A673 (cell line): ENCODE measurements at regions of chr22 and their contacts with region 1.

Region 1: GRCh38 chr22:46196278-46196677 is 46.0 kb downstream of the PPARA start:
- DNase-seq: no peak
- H3K4me3 ChIP-seq: no peak overlapping the region
- H3K27ac ChIP-seq: no peak overlapping the region
- H3K4me1 ChIP-seq: no peaks in the 10 kb centered on the region
- H3K27me3 ChIP-seq: no peaks in the 10 kb centered on the region
- CTCF ChIP-seq: no peak

Region 2: DNA sequence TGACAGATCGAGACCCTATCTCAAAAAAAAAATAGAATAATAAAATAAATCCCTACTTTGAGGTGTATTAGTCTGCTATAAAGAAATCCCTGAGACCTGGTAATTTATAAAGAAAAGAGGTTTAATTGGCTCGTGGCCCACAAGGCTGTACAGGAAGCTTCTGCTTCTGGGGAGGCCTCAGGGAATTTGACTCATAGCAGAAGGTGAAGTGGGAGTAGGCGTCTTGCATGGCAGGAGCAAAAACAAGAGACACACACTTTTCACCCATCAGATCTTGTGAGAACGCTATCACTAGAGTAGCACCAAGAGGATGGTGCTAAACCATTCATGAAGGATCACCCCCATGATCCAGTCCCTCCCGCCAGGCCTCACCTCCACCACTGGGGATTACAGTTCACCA is 24.6 kb after region 1 on chr22:
- CTCF ChIA-PET with region 1: no interaction called
- POLR2A ChIA-PET with region 1: interaction called, 14 read pairs
- intact Hi-C with region 1: no loop called
- DNase-seq: no peak
- H3K4me3 ChIP-seq: no peak overlapping the region
- H3K27ac ChIP-seq: no peak overlapping the region
- H3K4me1 ChIP-seq: no peaks in the 10 kb centered on the region
- H3K27me3 ChIP-seq: no peaks in the 10 kb centered on the region
- CTCF ChIP-seq: no peak